Activated T-helper 1 cell treated with anti-CD3 and anti-CD28 coated beads, Interleukin-12 subunit alpha, Interleukin-12 subunit beta, Interleukin-2, Interleukin-4 antibody, amounts not matched to agents 30 ng/mL and 10 ng/mL and 1 ng/mL, durations not matched to agents 14 hours and 24 hours and 36 hours (primary cell): ENCODE measurements at regions of chr2 and their contacts with region 1.

Region 1: GRCh38 chr2:135985018-135985825 is at the start of gene DARS1:
- DNase-seq: peak; percentile 78
- H3K4me3 Mint-ChIP-seq: peak within 1 kb of the TSS; percentile 91
- H3K27ac Mint-ChIP-seq: peak within 1 kb of the TSS; percentile 97
- H3K4me1 Mint-ChIP-seq: peaks cover 62% of the 10 kb centered on the region
- H3K27me3 Mint-ChIP-seq: no peaks in the 10 kb centered on the region
- total RNA-seq, gene DARS1: 132 and 140 TPM in 2 replicates

Region 2: GRCh38 chr2:135531231-135532228 is 453.7 kb before region 1 on chr2 and contains the start of gene R3HDM1:
- intact Hi-C with region 1: loop called (anchors 1 kb)
- DNase-seq: peak; percentile 95
- H3K4me3 Mint-ChIP-seq: no peak within 1 kb of the TSS
- H3K27ac Mint-ChIP-seq: peak within 1 kb of the TSS; percentile 83
- H3K4me1 Mint-ChIP-seq: peaks cover 17% of the 10 kb centered on the region
- H3K27me3 Mint-ChIP-seq: no peaks in the 10 kb centered on the region
- total RNA-seq, gene R3HDM1: 63.0 and 64.0 TPM in 2 replicates

Region 3: GRCh38 chr2:135820003-135820618 is 165.1 kb before region 1 on chr2:
- intact Hi-C with region 1: loop called (anchors 1 kb)
- DNase-seq: peak; percentile 75
- H3K4me3 Mint-ChIP-seq: peak overlapping the region; percentile 80
- H3K27ac Mint-ChIP-seq: peak overlapping the region; percentile 89
- H3K4me1 Mint-ChIP-seq: peaks cover 52% of the 10 kb centered on the region
- H3K27me3 Mint-ChIP-seq: no peaks in the 10 kb centered on the region

Region 4: DNA sequence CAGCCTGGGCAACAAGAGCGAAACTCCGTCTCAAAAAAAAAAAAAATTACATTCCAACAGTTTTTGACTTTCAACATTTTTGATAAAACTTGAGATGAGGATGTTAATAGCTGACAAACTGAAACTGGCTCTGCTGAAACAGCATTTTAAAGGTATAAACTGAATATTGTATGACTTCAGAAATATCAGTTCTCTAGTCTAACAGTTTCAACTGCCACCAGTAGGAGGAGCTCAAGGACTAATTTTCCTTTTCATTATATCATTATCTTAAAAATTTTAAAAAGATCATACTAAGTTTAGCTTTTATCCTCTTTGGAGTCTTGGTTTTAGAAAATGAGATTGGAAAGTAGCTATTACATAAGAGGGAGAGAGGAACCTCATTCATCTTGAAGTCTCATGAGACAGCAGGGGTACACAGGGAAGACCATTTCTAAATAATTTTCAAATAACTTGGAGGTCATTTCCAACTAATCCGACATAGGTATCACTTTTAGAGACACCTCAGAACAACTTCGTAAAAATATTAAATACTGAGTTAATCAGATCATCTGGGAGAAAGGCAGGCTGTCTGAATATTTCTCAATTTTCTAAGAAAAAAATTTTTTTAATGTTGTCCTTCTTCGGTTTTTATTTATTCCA is 71.4 kb before region 1 on chr2:
- intact Hi-C with region 1: loop called (anchors 1 kb)
- DNase-seq: no peak
- H3K4me3 Mint-ChIP-seq: no peak overlapping the region
- H3K27ac Mint-ChIP-seq: no peak overlapping the region
- H3K4me1 Mint-ChIP-seq: peaks cover 27% of the 10 kb centered on the region
- H3K27me3 Mint-ChIP-seq: no peaks in the 10 kb centered on the region

Region 5: GRCh38 chr2:135960656-135961551 is 24.3 kb before region 1 on chr2:
- intact Hi-C with region 1: loop called (anchors 1 kb)
- DNase-seq: peak; percentile 16
- H3K4me3 Mint-ChIP-seq: peak overlapping the region; percentile 28
- H3K27ac Mint-ChIP-seq: peak overlapping the region; percentile 80
- H3K4me1 Mint-ChIP-seq: peaks cover 55% of the 10 kb centered on the region
- H3K27me3 Mint-ChIP-seq: no peaks in the 10 kb centered on the region

Region 6: GRCh38 chr2:136019306-136019705 is 34.1 kb after region 1 on chr2:
- intact Hi-C with region 1: no loop called
- DNase-seq: no peak
- H3K4me3 Mint-ChIP-seq: no peak overlapping the region
- H3K27ac Mint-ChIP-seq: no peak overlapping the region
- H3K4me1 Mint-ChIP-seq: peaks cover 13% of the 10 kb centered on the region
- H3K27me3 Mint-ChIP-seq: peaks cover 2% of the 10 kb centered on the region

Region 7: GRCh38 chr2:136362676-136363390 is 377.6 kb after region 1 on chr2:
- intact Hi-C with region 1: loop called (anchors 1 kb)
- DNase-seq: no peak
- H3K4me3 Mint-ChIP-seq: peak overlapping the region; percentile 21
- H3K27ac Mint-ChIP-seq: peak overlapping the region; percentile 69
- H3K4me1 Mint-ChIP-seq: peaks cover 57% of the 10 kb centered on the region
- H3K27me3 Mint-ChIP-seq: peaks cover 4% of the 10 kb centered on the region